ENCODE measurements at regions of chr3 and their contacts with region 1.

Region 1: DNA sequence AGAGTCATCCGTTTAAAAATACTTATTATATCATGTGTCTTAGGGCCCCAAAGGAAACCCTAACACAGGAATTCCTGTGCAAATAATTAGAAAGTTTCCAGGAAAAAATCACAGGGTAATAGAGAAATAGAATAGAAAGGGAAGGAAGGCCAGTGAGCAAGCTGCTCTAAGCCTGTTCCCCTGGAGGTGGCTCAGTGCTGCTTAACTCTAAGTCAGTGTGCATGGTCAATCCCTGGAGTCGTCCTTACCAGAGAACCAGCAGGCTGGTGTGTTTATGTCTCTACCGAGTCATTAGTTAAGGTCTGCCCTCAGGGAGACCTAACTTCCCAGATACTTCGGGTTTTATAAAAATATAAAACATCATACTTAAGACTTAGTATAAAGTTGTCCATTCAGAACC is 21.0 kb upstream of the MCF2L2 start:
- DNase-seq: no peak
- H3K4me3 ChIP-seq: peak overlapping the region; percentile 27; the same call in 1 of the 2 replicates
- H3K27ac ChIP-seq: no peak overlapping the region
- H3K27me3 ChIP-seq: no peaks in the 10 kb centered on the region
- CTCF ChIP-seq: peak; percentile 25; the same call in 1 of the 2 replicates

Region 2: DNA sequence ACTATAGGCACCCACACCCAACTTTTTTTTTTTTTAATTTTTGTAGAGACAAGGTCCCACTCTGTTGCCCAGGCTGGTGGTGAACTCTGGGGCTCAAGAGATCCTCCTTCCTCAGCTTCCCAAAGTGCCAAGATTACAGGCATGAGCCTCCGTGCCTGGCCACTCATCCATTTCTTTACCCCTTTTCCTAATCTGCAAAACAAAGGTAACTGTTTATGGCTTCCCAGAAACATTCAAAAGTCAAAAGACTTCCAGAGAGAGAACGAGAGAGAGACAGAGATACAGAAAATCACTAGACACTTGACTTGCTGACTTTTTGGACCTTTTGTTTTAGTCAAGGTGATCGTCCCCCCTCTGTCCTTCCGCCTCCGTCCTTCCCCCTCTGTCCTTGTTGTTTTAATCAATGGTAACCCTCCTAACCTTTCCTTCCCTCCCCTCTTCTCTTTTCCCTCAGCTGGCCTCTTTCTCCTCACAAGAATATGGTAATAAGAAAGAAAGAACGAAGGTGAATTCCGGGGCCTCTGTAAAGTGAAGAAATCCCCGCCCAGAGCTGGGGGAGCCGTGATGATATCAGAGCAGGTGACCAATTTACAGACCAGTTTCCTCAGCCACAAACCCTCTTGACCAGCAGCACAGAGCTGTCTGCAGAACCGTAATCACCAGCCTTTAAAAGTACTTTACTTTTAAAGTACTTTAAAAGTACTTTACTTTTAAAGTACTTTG is 84.2 kb after region 1 on chr3:
- CTCF ChIA-PET with region 1: interaction called, 12 read pairs
- POLR2A ChIA-PET with region 1: no interaction called
- DNase-seq: no peak
- H3K4me3 ChIP-seq: no peak overlapping the region
- H3K27ac ChIP-seq: no peak overlapping the region
- H3K27me3 ChIP-seq: peaks cover 19% of the 10 kb centered on the region
- CTCF ChIP-seq: no peak

Measured in AG04450 (cell line).